ENCODE measurements at regions of chr2 and their contacts with region 1.

Region 1: GRCh38 chr2:208040199-208041171 is 15.2 kb upstream of the PLEKHM3 start:
- DNase-seq: peak; percentile 70
- ATAC-seq: peak; percentile 92
- H3K4me3 ChIP-seq: no peak overlapping the region
- H3K27ac ChIP-seq: no peak overlapping the region
- H3K4me1 ChIP-seq: peaks cover 0 to 4% of the 10 kb centered on the region in 2 experiments; a peak in 1 of 4 replicates
- H3K27me3 ChIP-seq: no peaks in the 10 kb centered on the region
- CTCF ChIP-seq: peak; percentile 72 to 91 (median 84)
- POLR2A ChIP-seq: no peak
- RAD21 ChIP-seq: peak; percentile 74

Region 2: GRCh38 chr2:206693399-206694137 is 1346.9 kb before region 1 on chr2:
- CTCF ChIA-PET with region 1: no interaction called
- POLR2A ChIA-PET with region 1: no interaction called
- RAD21 ChIA-PET with region 1: no interaction called
- intact Hi-C with region 1: loop called (anchors 5 kb)
- DNase-seq: peak; percentile 75
- ATAC-seq: peak; percentile 94
- H3K4me3 ChIP-seq: no peak overlapping the region
- H3K27ac ChIP-seq: no peak overlapping the region
- H3K4me1 ChIP-seq: no peaks in the 10 kb centered on the region
- H3K27me3 ChIP-seq: no peaks in the 10 kb centered on the region
- CTCF ChIP-seq: peak; percentile 49 to 79 (median 78); a peak in 4 of 6 replicates
- POLR2A ChIP-seq: no peak
- RAD21 ChIP-seq: peak; percentile 89

Region 3: GRCh38 chr2:206981739-206982340 is 1058.6 kb before region 1 on chr2:
- CTCF ChIA-PET with region 1: no interaction called
- POLR2A ChIA-PET with region 1: no interaction called
- RAD21 ChIA-PET with region 1: no interaction called
- intact Hi-C with region 1: loop called (anchors 10 kb)
- DNase-seq: peak; percentile 36
- ATAC-seq: peak; percentile 91
- H3K4me3 ChIP-seq: no peak overlapping the region
- H3K27ac ChIP-seq: no peak overlapping the region
- H3K4me1 ChIP-seq: no peaks in the 10 kb centered on the region
- H3K27me3 ChIP-seq: no peaks in the 10 kb centered on the region
- CTCF ChIP-seq: peak; percentile 75 to 83 (median 78)
- POLR2A ChIP-seq: no peak
- RAD21 ChIP-seq: peak; percentile 96

Region 4: GRCh38 chr2:207394812-207395534 is 645.5 kb before region 1 on chr2:
- CTCF ChIA-PET with region 1: no interaction called
- POLR2A ChIA-PET with region 1: no interaction called
- RAD21 ChIA-PET with region 1: no interaction called
- intact Hi-C with region 1: no loop called
- DNase-seq: peak; percentile 97
- ATAC-seq: peak; percentile 83
- H3K4me3 ChIP-seq: peak overlapping the region in 1 of 2 experiments; percentile 1; a peak in 2 of 4 replicates
- H3K27ac ChIP-seq: peak overlapping the region; percentile 9; the same call in 1 of the 2 replicates
- H3K4me1 ChIP-seq: peaks cover 12 to 26% of the 10 kb centered on the region in 2 experiments
- H3K27me3 ChIP-seq: no peaks in the 10 kb centered on the region
- CTCF ChIP-seq: no peak
- POLR2A ChIP-seq: no peak
- RAD21 ChIP-seq: peak; percentile 35; the same call in 1 of the 2 replicates

Region 5: DNA sequence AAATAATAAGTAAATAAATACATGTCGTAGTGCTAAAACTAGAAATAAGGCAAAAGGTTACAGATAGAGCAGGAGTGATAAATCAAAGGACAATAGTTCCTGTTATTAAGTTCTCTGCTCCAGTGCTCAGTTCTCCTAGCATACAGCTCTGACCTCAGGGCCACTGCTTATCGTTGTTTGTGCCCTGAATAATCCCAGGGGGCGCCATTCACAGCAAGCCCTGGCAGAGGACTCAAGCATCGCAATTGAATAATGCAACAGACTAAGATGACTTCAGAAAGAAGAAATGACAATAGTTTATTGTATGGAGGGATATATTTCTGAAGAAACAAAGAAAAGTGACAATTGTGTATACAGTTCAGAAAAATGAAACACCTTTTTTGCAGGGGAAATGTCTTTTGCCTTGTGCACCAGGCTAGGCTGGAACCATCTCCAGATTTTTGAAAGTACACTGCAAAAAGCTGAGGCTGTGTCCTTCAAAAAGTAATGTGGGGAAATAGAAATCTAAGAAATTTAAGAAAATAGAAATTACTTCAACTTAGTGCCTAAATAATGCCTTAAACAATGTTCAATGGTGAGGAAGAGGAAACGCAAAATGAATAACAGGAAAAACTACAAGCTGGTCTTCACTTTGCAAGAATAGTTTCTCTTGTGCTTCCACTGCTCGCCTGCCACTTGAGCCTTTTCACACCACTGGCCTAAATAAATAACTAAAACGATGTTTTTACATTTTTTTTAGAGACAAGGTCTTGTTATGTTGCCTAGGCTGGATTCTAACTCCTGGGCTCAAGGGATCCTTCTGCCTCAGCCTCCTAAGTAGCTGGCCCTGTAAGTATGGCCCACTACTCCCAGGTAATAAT is 348.0 kb before region 1 on chr2:
- CTCF ChIA-PET with region 1: interaction called, 12 read pairs
- POLR2A ChIA-PET with region 1: no interaction called
- RAD21 ChIA-PET with region 1: no interaction called
- intact Hi-C with region 1: loop called (anchors 1 kb)
- DNase-seq: peak; percentile 46
- ATAC-seq: peak; percentile 97
- H3K4me3 ChIP-seq: no peak overlapping the region
- H3K27ac ChIP-seq: no peak overlapping the region
- H3K4me1 ChIP-seq: no peaks in the 10 kb centered on the region
- H3K27me3 ChIP-seq: no peaks in the 10 kb centered on the region
- CTCF ChIP-seq: peak; percentile 60 to 89 (median 75)
- POLR2A ChIP-seq: no peak
- RAD21 ChIP-seq: peak; percentile 66

Region 6: GRCh38 chr2:207769597-207770486 is 270.6 kb before region 1 on chr2 and contains the start of gene FZD5:
- CTCF ChIA-PET with region 1: interaction called, 6 read pairs
- POLR2A ChIA-PET with region 1: no interaction called
- RAD21 ChIA-PET with region 1: no interaction called
- intact Hi-C with region 1: loop called (anchors 1 kb)
- DNase-seq: peak; percentile 85
- ATAC-seq: peak; percentile 91
- H3K4me3 ChIP-seq: peak within 1 kb of the TSS; percentile 69 to 83
- H3K27ac ChIP-seq: peak within 1 kb of the TSS; percentile 73
- H3K4me1 ChIP-seq: peaks cover 4 to 16% of the 10 kb centered on the region in 2 experiments; a peak in 3 of 4 replicates
- H3K27me3 ChIP-seq: no peaks in the 10 kb centered on the region
- CTCF ChIP-seq: peak; percentile 24 to 47 (median 33); a peak in 3 of 6 replicates
- POLR2A ChIP-seq: peak; percentile 57
- RAD21 ChIP-seq: peak; percentile 82
- total RNA-seq, gene FZD5: 9.0 TPM

Region 7: DNA sequence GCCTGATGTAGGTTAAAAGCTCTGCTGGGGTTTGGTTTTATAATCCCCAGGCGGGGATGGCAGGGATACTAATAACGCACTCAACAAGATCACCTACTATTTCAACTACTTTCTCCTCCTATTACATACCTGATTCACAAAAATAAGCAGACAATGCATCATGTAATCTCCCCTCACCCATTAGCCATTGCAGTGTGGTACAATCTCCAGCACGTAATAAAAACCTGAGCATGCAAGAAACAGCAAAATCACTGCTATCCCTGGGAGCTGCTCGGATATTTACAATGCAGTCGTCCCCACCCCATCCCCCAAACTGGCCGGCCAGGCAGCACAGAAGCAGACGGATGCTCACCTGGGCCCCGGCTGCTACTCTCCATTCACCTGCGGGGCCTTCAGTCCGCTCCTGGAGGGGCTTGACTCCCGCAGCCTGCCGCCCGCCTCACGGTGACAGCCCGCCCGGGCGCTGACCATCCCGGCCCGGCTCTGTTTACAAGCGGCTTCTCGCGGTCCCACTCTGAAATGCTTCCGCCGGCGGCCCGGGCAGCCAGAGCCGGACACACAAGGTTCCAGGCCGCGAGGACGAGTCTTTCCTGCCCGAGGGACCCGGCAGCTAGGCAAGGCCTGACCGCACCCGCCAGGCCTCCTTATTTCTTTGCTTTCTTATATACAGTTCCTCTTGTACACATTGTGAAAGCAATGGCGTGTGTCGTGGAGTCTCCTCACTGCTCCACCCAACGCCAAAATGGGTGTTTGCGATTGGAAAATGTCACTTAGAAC is 15.3 kb before region 1 on chr2 and contains the start of gene PLEKHM3:
- CTCF ChIA-PET with region 1: interaction called, 10 read pairs
- POLR2A ChIA-PET with region 1: no interaction called
- RAD21 ChIA-PET with region 1: no interaction called
- intact Hi-C with region 1: no loop called
- DNase-seq: peak; percentile 71
- ATAC-seq: peak; percentile 97
- H3K4me3 ChIP-seq: peak within 1 kb of the TSS; percentile 63 to 92
- H3K27ac ChIP-seq: peak within 1 kb of the TSS; percentile 29
- H3K4me1 ChIP-seq: peaks cover 2 to 15% of the 10 kb centered on the region in 2 experiments; a peak in 2 of 4 replicates
- H3K27me3 ChIP-seq: no peaks in the 10 kb centered on the region
- CTCF ChIP-seq: no peak
- POLR2A ChIP-seq: no peak
- RAD21 ChIP-seq: peak; percentile 25; the same call in 1 of the 2 replicates
- total RNA-seq, gene PLEKHM3: 6.3 TPM

Measured in HCT116 (cell line).